Activated CD4-positive, alpha-beta T cell treated with anti-CD3 and anti-CD28 coated beads, Interleukin-2, amount 10 ng/mL, durations not matched to agents 24 days and 14 days (primary cell): ENCODE measurements at regions of chr2 and their contacts with region 1.

Region 1: DNA sequence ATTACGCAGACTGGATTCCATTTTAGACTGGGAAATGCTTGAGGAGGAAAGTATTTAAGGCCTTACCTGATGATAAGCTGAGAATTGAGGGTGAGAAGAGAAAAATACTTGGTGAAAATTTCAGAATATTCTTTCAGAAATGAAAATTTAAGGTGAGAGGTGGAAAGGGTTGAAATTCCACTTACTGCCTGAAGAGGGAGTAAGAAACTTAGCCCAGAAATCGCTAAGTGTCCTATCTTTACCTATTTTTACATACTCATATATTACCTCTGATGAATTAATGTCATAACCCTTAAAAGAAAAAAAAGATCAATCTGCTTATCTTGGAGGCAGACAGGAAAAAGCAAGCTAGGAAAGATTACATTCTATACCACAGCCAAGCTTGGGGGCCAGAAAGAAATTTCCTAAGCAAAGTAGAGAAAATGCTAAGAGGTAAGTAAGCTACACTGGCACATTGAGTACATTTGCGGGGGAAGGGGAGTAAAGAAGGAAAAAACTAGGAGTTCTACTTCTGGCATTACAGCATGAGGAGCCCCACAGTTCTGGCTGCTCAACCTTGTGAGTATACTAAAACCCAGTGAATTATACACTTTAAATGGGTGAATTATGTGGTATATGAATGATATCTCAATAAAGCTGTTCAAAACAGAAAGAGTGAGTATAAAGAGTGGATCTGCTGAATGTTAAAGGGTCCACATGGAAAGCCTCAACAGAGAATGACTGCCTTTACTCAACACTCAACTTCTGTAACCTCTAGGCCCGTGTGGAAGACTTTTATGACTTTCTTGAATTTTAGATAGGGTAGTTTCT is 33.8 kb downstream of the SMC6 start:
- DNase-seq: no peak
- H3K4me3 Mint-ChIP-seq: no peak overlapping the region
- H3K27ac Mint-ChIP-seq: no peak overlapping the region
- H3K4me1 Mint-ChIP-seq: no peaks in the 10 kb centered on the region
- H3K27me3 Mint-ChIP-seq: no peaks in the 10 kb centered on the region

Region 2: DNA sequence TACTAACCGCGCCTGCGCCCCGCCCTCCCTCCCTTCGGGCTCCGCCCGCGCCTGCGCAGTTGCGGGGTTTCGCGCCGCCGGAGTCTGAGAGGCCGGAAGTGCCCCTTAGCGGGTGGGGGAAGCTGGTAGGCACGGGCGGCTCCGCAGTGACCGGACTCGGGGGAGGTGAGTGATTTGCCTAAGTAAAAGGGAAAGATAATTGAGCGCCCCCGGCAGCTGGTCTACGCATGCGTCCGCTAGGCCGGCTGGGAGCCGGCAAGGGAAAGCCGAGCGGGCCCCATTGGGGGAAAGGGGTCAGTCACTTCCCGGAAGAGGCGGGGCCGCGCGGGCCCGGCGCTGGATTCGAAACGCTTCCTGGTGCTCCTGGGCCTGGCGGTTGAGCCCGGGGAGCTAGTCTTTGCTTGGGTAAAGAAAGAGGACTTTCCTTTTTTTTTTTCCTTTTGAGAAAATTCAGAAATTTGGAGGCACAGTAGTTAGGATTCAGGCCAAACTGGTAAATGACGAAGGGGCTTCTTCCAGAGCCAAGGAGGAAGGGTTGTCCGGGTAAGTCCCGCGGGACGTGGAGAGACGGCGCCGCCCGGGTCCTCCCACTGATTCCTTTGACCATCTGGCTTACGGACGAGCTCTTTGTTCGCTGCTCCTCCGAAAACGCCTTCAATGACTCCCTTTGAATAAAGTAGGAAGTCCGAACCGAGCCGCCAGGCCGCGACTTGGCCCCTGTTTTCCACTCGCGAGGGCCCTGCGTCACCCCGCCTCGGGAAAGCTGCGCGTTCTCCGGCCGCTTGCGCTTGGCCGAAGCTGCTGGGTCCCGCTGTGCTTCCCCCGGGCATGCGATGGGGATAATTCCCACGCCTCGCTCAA is 34.3 kb after region 1 on chr2 and contains the starts of genes GEN1 and SMC6:
- intact Hi-C with region 1: loop called (anchors 2 kb)
- DNase-seq: peak; percentile 96
- H3K4me3 Mint-ChIP-seq: peak within 1 kb of the TSS; percentile 84
- H3K27ac Mint-ChIP-seq: peak within 1 kb of the TSS; percentile 96
- H3K4me1 Mint-ChIP-seq: peaks cover 38% of the 10 kb centered on the region
- H3K27me3 Mint-ChIP-seq: no peaks in the 10 kb centered on the region
- total RNA-seq, gene GEN1: 26.4 and 30.9 TPM in 2 replicates
- total RNA-seq, gene SMC6: 31.4 and 34.9 TPM in 2 replicates

Region 3: DNA sequence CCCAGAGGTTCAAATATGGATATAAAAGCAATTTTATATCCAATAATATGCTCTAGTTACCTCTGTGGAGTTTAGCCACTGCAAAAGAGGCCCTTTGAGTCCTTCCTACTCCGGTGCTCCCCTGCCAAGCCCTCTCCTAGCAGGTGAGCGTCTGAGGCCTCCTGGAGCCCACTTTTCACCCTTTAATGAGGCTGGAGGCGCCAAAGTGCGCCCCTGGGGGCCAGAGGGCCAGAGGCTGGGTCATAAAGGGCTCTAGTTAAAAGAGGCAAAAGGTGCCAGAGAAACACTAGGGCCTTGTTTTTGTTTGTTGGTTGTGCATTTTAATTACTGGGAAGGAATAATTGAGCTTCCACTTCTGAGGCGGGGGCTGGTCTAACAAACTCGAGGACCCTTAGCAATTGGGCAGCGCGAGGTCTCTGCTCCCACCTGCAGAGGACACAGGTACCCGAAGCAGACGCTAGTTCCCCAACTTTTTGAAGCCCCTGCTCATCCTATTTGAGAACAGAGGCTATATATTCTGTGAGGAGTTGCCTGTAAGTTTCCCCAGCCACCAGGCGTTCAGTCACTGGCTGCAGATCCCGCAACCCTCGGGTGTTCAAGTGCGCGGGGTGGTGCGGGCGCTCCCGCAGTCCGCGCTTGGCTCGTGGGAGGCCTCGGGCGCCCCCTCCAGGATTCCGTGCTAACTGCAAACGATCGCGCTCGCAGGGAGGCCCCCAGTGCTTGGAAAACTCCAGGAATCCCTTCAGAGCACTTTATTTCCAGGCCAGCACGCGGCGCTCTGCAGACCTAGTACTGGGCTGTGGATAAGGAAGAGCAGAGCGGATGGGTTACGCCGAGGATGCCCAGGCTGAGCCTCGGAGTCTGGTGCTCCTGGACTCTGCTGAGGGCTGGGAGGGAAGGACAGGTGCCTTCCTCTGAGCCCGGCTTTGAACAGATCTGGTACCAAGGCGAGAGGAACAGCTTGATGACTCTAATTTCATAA is 110.6 kb after region 1 on chr2:
- intact Hi-C with region 1: loop called (anchors 1 kb)
- DNase-seq: peak; percentile 88
- H3K4me3 Mint-ChIP-seq: peak overlapping the region; percentile 18
- H3K27ac Mint-ChIP-seq: no peak overlapping the region
- H3K4me1 Mint-ChIP-seq: no peaks in the 10 kb centered on the region
- H3K27me3 Mint-ChIP-seq: peaks cover 44% of the 10 kb centered on the region

Region 4: DNA sequence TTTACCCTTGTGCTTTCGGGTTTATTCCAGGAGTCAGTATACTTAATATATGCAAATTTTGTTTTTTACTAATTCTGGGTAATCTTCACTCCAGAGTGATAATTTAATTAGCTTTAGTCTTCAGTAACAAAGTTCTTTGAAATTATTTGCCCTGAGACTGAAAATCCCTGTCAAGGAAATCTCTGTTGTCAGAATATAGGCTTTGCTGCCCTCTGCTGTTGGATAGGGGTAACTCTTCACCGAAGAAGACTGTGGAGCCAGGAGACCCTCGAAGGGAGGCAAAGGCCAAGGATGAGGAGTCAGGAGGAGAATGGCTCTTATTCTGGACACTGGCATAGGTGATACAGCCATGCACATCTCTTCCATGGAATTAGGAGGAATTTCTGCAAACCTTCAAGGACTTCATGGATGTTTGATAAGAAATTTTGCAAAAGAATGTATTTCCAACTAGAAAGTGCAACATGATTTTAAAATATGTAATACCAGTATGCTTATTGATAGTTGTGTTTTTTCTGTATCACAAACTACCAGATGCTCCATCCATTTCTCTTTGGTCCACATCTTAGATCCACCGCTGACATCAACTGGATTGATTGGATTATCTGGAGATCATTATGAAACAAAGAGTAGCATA is 658.4 kb after region 1 on chr2:
- intact Hi-C with region 1: loop called (anchors 10 kb)
- DNase-seq: peak; percentile 64
- H3K4me3 Mint-ChIP-seq: no peak overlapping the region
- H3K27ac Mint-ChIP-seq: no peak overlapping the region
- H3K4me1 Mint-ChIP-seq: no peaks in the 10 kb centered on the region
- H3K27me3 Mint-ChIP-seq: peaks cover 9% of the 10 kb centered on the region